ENCODE measurements at regions of chr2 and their contacts with region 1.

Region 1: GRCh38 chr2:12533337-12534005 is 183.3 kb upstream of the TRIB2 start:
- DNase-seq: no peak
- H3K4me3 ChIP-seq: no peak overlapping the region
- H3K27ac ChIP-seq: no peak overlapping the region
- H3K4me1 ChIP-seq: peaks cover 20% of the 10 kb centered on the region
- H3K27me3 ChIP-seq: no peaks in the 10 kb centered on the region
- CTCF ChIP-seq: no peak

Region 2: DNA sequence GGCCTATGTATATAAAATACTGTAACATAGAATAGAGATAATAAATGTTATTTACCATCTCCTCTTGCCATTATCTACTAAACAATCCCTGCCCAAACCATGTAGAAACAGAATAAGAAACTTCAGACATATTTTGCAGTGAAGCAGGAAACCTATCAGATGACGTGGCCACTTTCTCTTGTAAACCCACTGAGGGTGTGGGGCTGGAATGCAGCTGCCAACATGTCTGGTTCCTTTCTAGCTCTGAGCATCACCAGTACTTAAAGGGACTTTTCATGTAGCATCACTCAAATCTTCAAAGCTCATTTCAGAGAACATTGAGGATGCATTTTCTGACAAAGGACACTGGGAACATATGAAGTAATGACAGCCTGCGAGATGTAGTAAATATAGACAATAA is 535.3 kb before region 1 on chr2:
- CTCF ChIA-PET with region 1: no interaction called
- dilution Hi-C with region 1: no loop called
- in situ Hi-C with region 1: no loop called
- intact Hi-C with region 1: no loop called
- DNase-seq: peak; percentile 27
- H3K4me3 ChIP-seq: no peak overlapping the region
- H3K27ac ChIP-seq: no peak overlapping the region
- H3K4me1 ChIP-seq: peaks cover 4% of the 10 kb centered on the region
- H3K27me3 ChIP-seq: no peaks in the 10 kb centered on the region
- CTCF ChIP-seq: no peak

Region 3: GRCh38 chr2:12076810-12077209 is 456.7 kb before region 1 on chr2:
- CTCF ChIA-PET with region 1: no interaction called
- dilution Hi-C with region 1: no loop called
- in situ Hi-C with region 1: no loop called
- intact Hi-C with region 1: no loop called
- DNase-seq: peak; percentile 42
- H3K4me3 ChIP-seq: no peak overlapping the region
- H3K27ac ChIP-seq: no peak overlapping the region
- H3K4me1 ChIP-seq: no peaks in the 10 kb centered on the region
- H3K27me3 ChIP-seq: peaks cover 2% of the 10 kb centered on the region
- CTCF ChIP-seq: no peak

Region 4: DNA sequence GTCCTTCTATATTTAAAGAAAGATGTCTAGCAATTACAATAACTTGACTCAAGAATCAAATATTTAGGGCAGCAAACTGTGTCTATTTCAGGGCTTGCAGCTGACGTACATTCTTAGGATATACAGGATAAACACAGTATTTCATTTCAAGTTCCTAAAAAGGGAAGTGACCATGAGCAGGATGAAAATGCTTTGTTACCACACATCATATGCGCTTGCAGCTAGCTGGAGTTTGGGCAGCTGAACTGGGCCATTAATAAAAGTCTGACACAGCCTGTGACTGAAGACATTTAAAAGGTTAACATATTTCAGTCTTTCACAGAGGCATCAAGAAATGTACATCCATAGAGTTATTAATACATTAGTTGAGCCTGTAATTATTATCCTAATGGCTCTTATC is 81.3 kb before region 1 on chr2:
- CTCF ChIA-PET with region 1: no interaction called
- dilution Hi-C with region 1: no loop called
- in situ Hi-C with region 1: no loop called
- intact Hi-C with region 1: no loop called
- DNase-seq: no peak
- H3K4me3 ChIP-seq: no peak overlapping the region
- H3K27ac ChIP-seq: no peak overlapping the region
- H3K4me1 ChIP-seq: peaks cover 11% of the 10 kb centered on the region
- H3K27me3 ChIP-seq: no peaks in the 10 kb centered on the region
- CTCF ChIP-seq: no peak

Region 5: GRCh38 chr2:12514631-12515433 is 18.6 kb before region 1 on chr2:
- CTCF ChIA-PET with region 1: no interaction called
- dilution Hi-C with region 1: no loop called
- in situ Hi-C with region 1: no loop called
- intact Hi-C with region 1: loop called (anchors 2 kb)
- DNase-seq: no peak
- H3K4me3 ChIP-seq: no peak overlapping the region
- H3K27ac ChIP-seq: no peak overlapping the region
- H3K4me1 ChIP-seq: peaks cover 6% of the 10 kb centered on the region
- H3K27me3 ChIP-seq: no peaks in the 10 kb centered on the region
- CTCF ChIP-seq: no peak

Region 6: GRCh38 chr2:14016289-14016955 is 1483.0 kb after region 1 on chr2:
- CTCF ChIA-PET with region 1: no interaction called
- dilution Hi-C with region 1: no loop called
- in situ Hi-C with region 1: no loop called
- intact Hi-C with region 1: no loop called
- DNase-seq: peak; percentile 55
- H3K4me3 ChIP-seq: no peak overlapping the region
- H3K27ac ChIP-seq: no peak overlapping the region
- H3K4me1 ChIP-seq: peaks cover 17% of the 10 kb centered on the region
- H3K27me3 ChIP-seq: no peaks in the 10 kb centered on the region
- CTCF ChIP-seq: no peak